GM12878 (cell line): ENCODE measurements at regions of chr14 and their contacts with region 1.

Region 1: DNA sequence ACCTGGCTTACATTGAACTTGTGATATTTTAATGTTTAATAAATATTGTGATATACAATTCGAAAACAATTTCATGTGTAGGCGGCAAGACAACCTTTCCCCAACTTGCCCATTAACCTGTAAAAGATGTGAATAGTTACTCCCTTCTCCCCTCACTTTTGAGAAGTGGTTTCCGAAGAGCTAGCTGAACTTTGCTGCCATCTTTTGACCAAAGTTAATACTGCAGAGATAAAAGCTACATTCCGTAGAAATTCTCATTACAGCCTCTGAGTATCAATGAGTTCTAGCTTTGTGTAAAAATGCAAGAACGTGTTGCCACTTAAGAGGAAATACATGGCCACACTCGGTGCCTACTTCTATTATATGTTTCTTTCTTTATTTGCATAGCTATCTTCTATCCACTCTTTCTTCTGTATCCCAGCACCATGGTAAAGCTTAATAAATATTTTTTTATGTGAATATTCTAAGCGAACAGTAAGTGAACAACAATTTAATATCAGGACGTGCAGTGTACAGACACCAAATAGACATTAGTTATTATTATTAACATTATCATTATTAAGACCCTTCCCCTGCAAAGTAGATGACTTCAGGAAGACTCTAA is 105.1 kb upstream of the TMEM260 start:
- DNase-seq: no peak
- ATAC-seq: peak; percentile 63
- H3K4me3 ChIP-seq: no peak overlapping the region
- H3K27ac ChIP-seq: no peak overlapping the region
- H3K4me1 ChIP-seq: no peaks in the 10 kb centered on the region
- H3K27me3 ChIP-seq: no peaks in the 10 kb centered on the region
- CTCF ChIP-seq: peak; percentile 67 to 82 (median 81)
- EP300 ChIP-seq: no peak
- POLR2A ChIP-seq: no peak
- RAD21 ChIP-seq: peak; percentile 86

Region 2: DNA sequence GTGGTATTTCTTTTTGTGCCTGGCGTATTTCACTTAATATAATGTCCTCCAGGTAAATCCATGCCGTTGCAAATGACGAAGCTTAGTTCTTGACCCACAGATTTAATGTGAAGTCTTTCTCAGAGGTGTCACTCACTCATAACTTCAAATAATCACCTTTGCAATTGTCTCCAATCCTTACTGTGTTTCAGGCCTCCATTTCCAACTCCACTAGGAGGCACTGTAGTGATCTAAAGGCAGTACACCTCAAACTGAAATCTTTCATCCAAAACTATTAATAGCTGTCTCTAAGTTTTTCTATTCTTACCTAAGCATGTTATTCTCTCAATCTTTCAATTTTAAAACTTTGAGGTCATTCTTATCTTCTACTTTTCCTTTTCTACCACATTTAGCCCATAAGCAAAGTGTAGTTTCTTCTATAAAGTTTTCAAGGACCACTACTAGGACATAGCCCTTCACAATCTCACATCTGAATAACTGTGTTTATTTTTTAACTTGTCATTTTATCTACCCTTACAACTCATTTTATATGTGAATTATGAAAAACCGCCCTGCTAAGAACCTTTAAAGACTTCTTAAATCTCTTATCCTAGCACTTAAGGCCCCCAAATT is 1228.8 kb before region 1 on chr14:
- CTCF ChIA-PET with region 1: no interaction called
- POLR2A ChIA-PET with region 1: no interaction called
- RAD21 ChIA-PET with region 1: no interaction called
- SMC1A ChIA-PET with region 1: no interaction called
- in situ Hi-C with region 1: loop called (anchors 10 kb)
- intact Hi-C with region 1: no loop called
- DNase-seq: no peak
- ATAC-seq: peak; percentile 83
- H3K4me3 ChIP-seq: no peak overlapping the region
- H3K27ac ChIP-seq: no peak overlapping the region
- H3K4me1 ChIP-seq: no peaks in the 10 kb centered on the region
- H3K27me3 ChIP-seq: no peaks in the 10 kb centered on the region
- CTCF ChIP-seq: peak; percentile 57 to 68 (median 64); a peak in 5 of 6 replicates
- EP300 ChIP-seq: no peak
- POLR2A ChIP-seq: no peak
- RAD21 ChIP-seq: peak; percentile 68

Region 3: DNA sequence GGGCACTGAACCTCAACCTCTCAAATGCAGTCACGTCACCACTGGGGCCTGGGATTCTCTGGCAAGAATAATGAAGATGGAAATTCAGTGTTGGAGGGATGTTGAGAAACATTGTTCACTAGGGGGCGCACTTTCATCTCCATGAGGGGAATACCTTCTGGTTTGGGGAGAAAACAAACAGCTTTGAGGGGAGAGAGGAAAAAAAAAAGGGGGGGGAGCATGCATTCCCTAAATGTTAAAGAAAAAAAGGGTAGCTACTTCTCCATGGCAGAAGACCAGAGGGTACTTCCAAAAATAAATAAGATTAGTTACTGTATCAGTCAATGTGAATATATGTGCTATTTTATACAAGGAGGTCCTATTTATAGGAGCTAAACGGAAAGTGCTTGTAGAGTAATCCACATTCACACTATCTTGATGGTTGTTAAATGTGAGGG is 1028.3 kb before region 1 on chr14:
- CTCF ChIA-PET with region 1: interaction called, 20 read pairs
- POLR2A ChIA-PET with region 1: no interaction called
- RAD21 ChIA-PET with region 1: interaction called, 10 read pairs
- SMC1A ChIA-PET with region 1: interaction called, 9 read pairs
- in situ Hi-C with region 1: loop called (anchors 5 kb)
- intact Hi-C with region 1: loop called (anchors 5 kb)
- DNase-seq: no peak
- ATAC-seq: peak; percentile 72
- H3K4me3 ChIP-seq: no peak overlapping the region
- H3K27ac ChIP-seq: no peak overlapping the region
- H3K4me1 ChIP-seq: no peaks in the 10 kb centered on the region
- H3K27me3 ChIP-seq: no peaks in the 10 kb centered on the region
- CTCF ChIP-seq: peak; percentile 62 to 68 (median 62)
- EP300 ChIP-seq: no peak
- POLR2A ChIP-seq: no peak
- RAD21 ChIP-seq: peak; percentile 82

Region 4: GRCh38 chr14:55715889-55716288 is 758.6 kb before region 1 on chr14:
- CTCF ChIA-PET with region 1: no interaction called
- POLR2A ChIA-PET with region 1: no interaction called
- RAD21 ChIA-PET with region 1: no interaction called
- SMC1A ChIA-PET with region 1: no interaction called
- in situ Hi-C with region 1: loop called (anchors 10 kb)
- intact Hi-C with region 1: no loop called
- DNase-seq: no peak
- ATAC-seq: peak; percentile 83
- H3K4me3 ChIP-seq: no peak overlapping the region
- H3K27ac ChIP-seq: no peak overlapping the region
- H3K4me1 ChIP-seq: peaks cover 3% of the 10 kb centered on the region; the same call in 1 of the 2 replicates
- H3K27me3 ChIP-seq: no peaks in the 10 kb centered on the region
- CTCF ChIP-seq: no peak
- EP300 ChIP-seq: no peak
- POLR2A ChIP-seq: no peak
- RAD21 ChIP-seq: no peak

Region 5: GRCh38 chr14:55864890-55865655 is 609.4 kb before region 1 on chr14:
- CTCF ChIA-PET with region 1: no interaction called
- POLR2A ChIA-PET with region 1: no interaction called
- RAD21 ChIA-PET with region 1: interaction called, 3 read pairs
- SMC1A ChIA-PET with region 1: no interaction called
- in situ Hi-C with region 1: no loop called
- intact Hi-C with region 1: loop called (anchors 10 kb)
- DNase-seq: no peak
- ATAC-seq: no peak
- H3K4me3 ChIP-seq: no peak overlapping the region
- H3K27ac ChIP-seq: no peak overlapping the region
- H3K4me1 ChIP-seq: no peaks in the 10 kb centered on the region
- H3K27me3 ChIP-seq: no peaks in the 10 kb centered on the region
- CTCF ChIP-seq: peak; percentile 9 to 44 (median 15); a peak in 5 of 6 replicates
- EP300 ChIP-seq: no peak
- POLR2A ChIP-seq: no peak
- RAD21 ChIP-seq: peak; percentile 66

Region 6: DNA sequence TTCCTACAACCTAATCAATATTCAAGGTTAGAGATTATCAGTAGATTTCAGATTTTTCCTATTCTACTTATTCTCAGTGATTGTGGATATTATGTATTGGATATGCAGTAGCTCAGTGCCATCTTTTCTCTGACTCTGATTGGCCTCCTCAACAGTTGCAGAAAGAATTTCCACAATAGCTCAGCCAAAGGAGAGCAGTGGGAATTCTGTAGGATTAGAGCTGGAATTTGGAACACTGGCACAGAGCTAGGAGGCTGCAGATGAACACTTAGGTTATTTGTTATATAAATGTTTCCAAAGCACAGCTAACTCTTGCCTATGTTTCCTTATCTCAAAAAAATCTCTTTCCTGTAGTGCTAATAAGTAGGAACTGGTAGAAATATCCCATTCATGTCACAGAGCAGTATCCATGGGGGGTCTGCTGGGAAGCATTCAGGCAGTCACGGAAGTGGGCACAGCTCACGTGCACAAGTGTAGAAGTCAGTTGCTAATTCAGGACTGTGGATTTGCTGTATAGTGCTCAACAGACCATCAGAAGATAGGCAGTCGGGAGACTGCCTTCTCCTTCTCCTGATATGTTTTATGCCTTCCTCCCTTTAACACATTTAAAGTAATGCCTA is 11.1 kb before region 1 on chr14:
- CTCF ChIA-PET with region 1: interaction called, 30 read pairs
- POLR2A ChIA-PET with region 1: no interaction called
- RAD21 ChIA-PET with region 1: interaction called, 7 read pairs
- SMC1A ChIA-PET with region 1: interaction called, 10 read pairs
- in situ Hi-C with region 1: no loop called
- intact Hi-C with region 1: no loop called
- DNase-seq: no peak
- ATAC-seq: no peak
- H3K4me3 ChIP-seq: no peak overlapping the region
- H3K27ac ChIP-seq: no peak overlapping the region
- H3K4me1 ChIP-seq: no peaks in the 10 kb centered on the region
- H3K27me3 ChIP-seq: no peaks in the 10 kb centered on the region
- CTCF ChIP-seq: no peak
- EP300 ChIP-seq: no peak
- POLR2A ChIP-seq: no peak
- RAD21 ChIP-seq: no peak

Region 7: DNA sequence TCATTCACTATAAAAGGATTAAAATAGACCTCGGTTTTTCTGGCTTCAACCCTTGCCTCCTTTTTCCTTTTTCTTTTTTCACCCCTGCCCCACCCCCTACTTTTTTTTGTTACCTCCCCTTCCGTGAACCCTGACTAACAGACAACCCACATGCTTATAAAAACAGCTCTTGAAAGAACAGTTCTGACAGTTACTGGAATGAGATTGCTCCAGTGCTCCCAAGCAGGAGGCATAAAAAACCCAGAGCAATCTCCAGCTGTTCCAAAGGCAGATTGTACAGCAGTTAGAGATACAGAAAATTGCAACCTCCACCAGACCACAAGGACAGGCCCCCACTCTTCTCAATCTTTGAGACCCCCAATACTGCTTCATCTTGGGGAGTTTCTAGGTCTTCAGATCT is 75.2 kb after region 1 on chr14:
- CTCF ChIA-PET with region 1: no interaction called
- POLR2A ChIA-PET with region 1: no interaction called
- RAD21 ChIA-PET with region 1: no interaction called
- SMC1A ChIA-PET with region 1: no interaction called
- in situ Hi-C with region 1: no loop called
- intact Hi-C with region 1: no loop called
- DNase-seq: no peak
- ATAC-seq: no peak
- H3K4me3 ChIP-seq: no peak overlapping the region
- H3K27ac ChIP-seq: no peak overlapping the region
- H3K4me1 ChIP-seq: no peaks in the 10 kb centered on the region
- H3K27me3 ChIP-seq: 0 out of 4 replicates have a peak, but pooled peaks cover 0 to 2% of the 10 kb centered on the region in 2 experiments
- CTCF ChIP-seq: no peak
- EP300 ChIP-seq: no peak
- POLR2A ChIP-seq: no peak
- RAD21 ChIP-seq: no peak